AG04449 (cell line): ENCODE measurements at regions of chr14 and their contacts with region 1.

Region 1: DNA sequence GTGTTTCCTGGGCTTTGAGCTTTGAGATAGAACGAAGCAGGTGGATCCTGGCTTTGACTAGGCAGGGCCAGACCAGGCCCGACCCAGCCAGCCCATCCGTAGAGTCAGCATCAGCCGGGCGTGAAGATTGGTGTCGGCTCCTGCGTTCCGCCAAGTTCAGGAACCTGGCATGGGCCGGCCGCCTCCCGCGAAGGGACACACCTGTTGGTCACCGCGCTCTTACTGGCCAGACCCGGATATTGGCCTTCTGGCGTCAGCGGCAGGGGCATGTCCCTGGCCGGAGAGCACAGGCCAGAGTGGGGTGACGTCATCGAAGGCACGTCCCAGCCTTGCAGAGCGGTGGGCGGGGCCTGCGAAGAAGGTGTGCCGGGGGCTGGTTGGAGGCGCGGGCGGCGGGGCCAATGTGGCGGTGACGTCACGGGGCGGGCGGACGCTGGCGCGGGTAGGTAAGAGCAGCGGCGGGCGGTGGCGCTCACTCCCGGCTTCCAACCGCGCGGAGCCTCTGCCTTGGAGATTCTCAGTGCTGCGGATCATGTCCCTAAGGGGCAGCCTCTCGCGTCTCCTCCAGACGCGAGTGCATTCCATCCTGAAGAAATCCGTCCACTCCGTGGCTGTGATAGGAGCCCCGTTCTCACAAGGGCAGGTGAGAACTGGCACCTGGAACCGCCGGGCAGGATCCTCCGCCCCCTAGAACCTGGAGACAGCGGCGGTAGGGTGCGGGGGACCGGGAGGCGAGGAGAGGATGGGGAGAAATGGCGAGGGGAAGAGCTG is at the start of gene ARG2:
- DNase-seq: no peak
- H3K4me3 ChIP-seq: peak within 1 kb of the TSS; percentile 71
- CTCF ChIP-seq: peak; percentile 14

Region 2: DNA sequence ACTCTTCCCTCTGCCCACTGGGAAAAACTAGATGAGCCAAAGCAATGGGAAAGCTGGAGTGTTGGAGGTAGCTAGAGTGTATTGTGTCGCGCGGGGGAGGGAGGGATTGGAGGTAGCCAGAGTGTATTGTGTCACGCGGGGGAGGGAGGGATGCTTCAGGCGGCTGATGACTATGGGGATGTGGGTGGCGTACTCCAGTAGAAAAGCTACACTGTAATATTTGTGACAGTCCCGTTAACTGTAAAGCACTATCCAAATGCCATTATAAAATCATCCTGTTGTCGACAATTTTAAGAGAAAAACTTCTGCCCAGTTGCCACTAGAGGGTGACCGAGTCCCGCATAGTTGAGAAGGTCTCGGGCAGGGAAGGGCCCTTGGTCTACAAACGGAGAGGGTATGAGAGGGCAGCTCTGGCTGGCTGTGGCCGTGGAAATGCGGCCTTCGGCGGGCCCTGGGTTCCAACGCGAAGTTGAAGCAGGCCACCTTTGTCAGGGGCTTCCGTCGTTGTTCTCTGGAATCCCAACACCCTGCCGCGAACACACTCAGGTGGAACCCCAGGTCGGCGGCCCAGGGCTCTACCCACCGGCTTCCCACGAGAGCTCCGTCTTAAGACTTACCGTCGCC is 192.5 kb before region 1 on chr14:
- CTCF ChIA-PET with region 1: interaction called, 23 read pairs
- POLR2A ChIA-PET with region 1: no interaction called
- DNase-seq: no peak
- H3K4me3 ChIP-seq: no peak overlapping the region
- CTCF ChIP-seq: peak; percentile 78

Region 3: GRCh38 chr14:67599698-67600561 is 19.7 kb before region 1 on chr14 and contains the start of gene PIGH:
- CTCF ChIA-PET with region 1: interaction called, 15 read pairs
- POLR2A ChIA-PET with region 1: no interaction called
- DNase-seq: no peak
- H3K4me3 ChIP-seq: peak within 1 kb of the TSS; percentile 86
- CTCF ChIP-seq: peak; percentile 69

Region 4: GRCh38 chr14:67636361-67636919 is 16.8 kb after region 1 on chr14:
- CTCF ChIA-PET with region 1: interaction called, 13 read pairs
- POLR2A ChIA-PET with region 1: interaction called, 3 read pairs
- DNase-seq: peak; percentile 67
- H3K4me3 ChIP-seq: no peak overlapping the region
- CTCF ChIP-seq: no peak

Region 5: DNA sequence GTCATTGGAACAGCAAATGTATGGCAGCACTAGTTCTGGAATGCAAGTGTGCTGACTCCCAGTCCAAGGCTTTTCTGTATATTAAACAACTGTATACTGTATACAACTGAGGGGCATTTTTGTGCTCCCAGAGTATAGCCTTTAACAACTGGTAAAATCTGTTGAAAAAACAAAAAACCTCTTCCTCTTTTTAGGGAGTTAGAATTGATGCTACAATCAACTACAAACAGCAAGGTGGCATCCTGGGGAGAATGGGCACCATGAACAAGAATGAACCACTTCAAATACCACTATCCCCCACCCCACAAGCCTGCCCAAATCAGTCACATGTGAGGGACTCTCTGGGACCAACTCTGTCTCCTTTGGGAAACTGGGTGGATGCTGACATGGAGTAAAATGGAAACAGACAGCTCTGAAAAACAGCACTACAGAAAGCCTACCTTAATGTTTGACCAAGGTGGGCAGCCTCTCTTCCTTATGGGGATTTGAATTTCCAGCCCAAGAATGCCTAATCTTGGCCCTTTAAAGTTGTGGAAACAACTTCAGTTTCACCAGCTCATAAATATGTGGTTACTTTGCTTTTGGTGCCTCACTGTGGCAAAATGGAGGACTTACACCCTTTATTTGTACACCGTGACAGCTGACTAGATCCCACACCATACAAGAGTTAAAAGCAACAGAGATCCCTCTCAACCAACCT is 47.3 kb after region 1 on chr14:
- CTCF ChIA-PET with region 1: interaction called, 269 read pairs
- POLR2A ChIA-PET with region 1: no interaction called
- DNase-seq: no peak
- H3K4me3 ChIP-seq: no peak overlapping the region
- CTCF ChIP-seq: peak; percentile 61

Region 6: GRCh38 chr14:67695394-67695949 is 75.8 kb after region 1 on chr14 and contains the start of gene RDH11:
- CTCF ChIA-PET with region 1: interaction called, 138 read pairs
- POLR2A ChIA-PET with region 1: interaction called, 3 read pairs
- DNase-seq: no peak
- H3K4me3 ChIP-seq: peak within 1 kb of the TSS; percentile 94
- CTCF ChIP-seq: no peak